H1 (cell line): ENCODE measurements at regions of chr20 and their contacts with region 1.

Region 1: GRCh38 chr20:45300961-45301360 is 5.7 kb upstream of the RBPJL start:
- DNase-seq: peak in 1 of 2 experiments; percentile 79
- H3K4me3 ChIP-seq: no peak overlapping the region
- H3K27ac ChIP-seq: no peak overlapping the region
- H3K4me1 ChIP-seq: peaks cover 0 to 5% (median 1%) of the 10 kb centered on the region in 4 experiments; a peak in 2 of 7 replicates
- H3K27me3 ChIP-seq: no peaks in the 10 kb centered on the region; a peak in 1 of 7 replicates
- CTCF ChIP-seq: peak; percentile 57 to 81 (median 77)
- EP300 ChIP-seq: no peak
- POLR2A ChIP-seq: no peak
- RAD21 ChIP-seq: peak in 1 of 2 experiments; percentile 6; a peak in 1 of 4 replicates

Region 2: GRCh38 chr20:45246109-45246508 is 54.9 kb before region 1 on chr20:
- CTCF ChIA-PET with region 1: no interaction called
- POLR2A ChIA-PET with region 1: no interaction called
- DNase-seq: no peak
- H3K4me3 ChIP-seq: no peak overlapping the region
- H3K27ac ChIP-seq: no peak overlapping the region
- H3K4me1 ChIP-seq: no peaks in the 10 kb centered on the region
- H3K27me3 ChIP-seq: no peaks in the 10 kb centered on the region; a peak in 1 of 7 replicates
- CTCF ChIP-seq: no peak
- EP300 ChIP-seq: no peak
- POLR2A ChIP-seq: no peak
- RAD21 ChIP-seq: no peak

Region 3: GRCh38 chr20:45311589-45312211 is 10.7 kb after region 1 on chr20:
- CTCF ChIA-PET with region 1: interaction called, 18 read pairs
- POLR2A ChIA-PET with region 1: interaction called, 7 read pairs
- DNase-seq: peak in 1 of 2 experiments; percentile 93
- H3K4me3 ChIP-seq: peak overlapping the region; percentile 24 to 55 (median 48); a peak in 7 of 8 replicates
- H3K27ac ChIP-seq: no peak overlapping the region
- H3K4me1 ChIP-seq: peaks cover 0 to 11% (median 7%) of the 10 kb centered on the region in 4 experiments; a peak in 5 of 7 replicates
- H3K27me3 ChIP-seq: peaks cover 0 to 15% (median 5%) of the 10 kb centered on the region in 4 experiments; a peak in 5 of 7 replicates
- CTCF ChIP-seq: peak; percentile 87 to 96 (median 95)
- EP300 ChIP-seq: no peak
- POLR2A ChIP-seq: no peak
- RAD21 ChIP-seq: peak; percentile 69 to 73

Region 4: DNA sequence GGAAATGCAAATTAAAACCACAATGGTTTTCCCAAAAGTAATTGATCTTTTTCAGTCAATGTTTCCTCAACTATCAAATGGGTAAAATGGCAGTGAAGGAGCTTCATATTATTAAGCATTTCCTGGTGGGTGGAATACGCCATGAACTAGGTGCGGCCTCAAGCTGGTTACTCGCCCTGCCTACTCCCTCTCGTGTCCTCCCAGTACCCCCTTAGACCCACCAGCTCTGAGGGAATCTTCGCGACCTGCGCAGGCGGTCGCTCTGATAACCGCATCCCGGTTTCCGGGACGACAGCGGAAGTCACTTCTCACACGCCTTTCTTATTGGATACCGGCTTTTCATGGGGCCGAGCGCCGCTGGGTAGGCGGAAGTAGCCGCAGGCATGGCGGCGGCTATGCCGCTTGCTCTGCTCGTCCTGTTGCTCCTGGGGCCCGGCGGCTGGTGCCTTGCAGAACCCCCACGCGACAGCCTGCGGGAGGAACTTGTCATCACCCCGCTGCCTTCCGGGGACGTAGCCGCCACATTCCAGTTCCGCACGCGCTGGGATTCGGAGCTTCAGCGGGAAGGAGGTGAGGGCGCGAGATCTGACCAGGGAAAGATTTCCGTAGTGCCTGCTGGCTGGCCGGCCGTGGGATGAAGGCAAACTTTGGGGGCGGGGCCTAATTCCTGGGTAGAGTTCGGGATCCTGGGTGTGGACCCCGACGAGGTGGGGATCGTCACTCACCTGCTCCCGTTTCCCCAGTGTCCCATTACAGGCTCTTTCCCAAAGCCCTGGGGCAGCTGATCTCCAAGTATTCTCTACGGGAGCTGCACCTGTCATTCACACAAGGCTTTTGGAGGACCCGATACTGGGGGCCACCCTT is 115.0 kb after region 1 on chr20 and contains the start of gene PIGT:
- CTCF ChIA-PET with region 1: no interaction called
- POLR2A ChIA-PET with region 1: no interaction called
- DNase-seq: peak; percentile 54 to 84
- H3K4me3 ChIP-seq: peak within 1 kb of the TSS; percentile 74 to 89 (median 82)
- H3K27ac ChIP-seq: peak within 1 kb of the TSS; percentile 49
- H3K4me1 ChIP-seq: peaks cover 0 to 5% (median 2%) of the 10 kb centered on the region in 4 experiments; a peak in 3 of 7 replicates
- H3K27me3 ChIP-seq: no peaks in the 10 kb centered on the region
- CTCF ChIP-seq: no peak
- EP300 ChIP-seq: no peak
- POLR2A ChIP-seq: peak; percentile 80 to 87
- RAD21 ChIP-seq: peak; percentile 2 to 13; a peak in 1 of 4 replicates
- total RNA-seq, gene PIGT: 64.3 and 66.0 TPM in 2 replicates